ENCODE measurements at regions of chr14 and their contacts with region 1.

Region 1: GRCh38 chr14:44961604-44962333 is at the starts of genes KLHL28 and TOGARAM1:
- DNase-seq: peak; percentile 96 to 99
- ATAC-seq: peak; percentile 92
- total RNA-seq, gene KLHL28: 13.8 to 17.6 TPM
- total RNA-seq, gene TOGARAM1: 11.0 to 13.6 TPM

Region 2: DNA sequence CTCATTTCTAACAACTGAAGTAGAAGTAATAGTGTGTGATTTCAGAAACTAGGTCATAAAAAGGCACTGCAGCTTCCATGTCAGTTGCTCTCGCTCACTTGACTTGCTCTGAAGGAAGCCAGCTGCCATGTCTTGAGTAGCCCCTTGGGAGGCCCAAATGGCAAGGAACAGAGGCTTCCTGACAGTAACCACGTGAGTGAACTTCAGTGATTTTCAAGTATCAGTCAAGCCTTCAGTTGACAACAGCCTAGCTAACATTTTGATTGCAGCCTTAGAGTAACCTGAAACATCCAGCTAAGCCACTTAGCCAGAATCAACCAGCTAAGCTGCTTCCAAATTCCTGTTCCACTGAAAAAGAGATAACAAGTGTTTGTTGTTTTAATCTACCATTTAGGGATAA is 26.9 kb after region 1 on chr14:
- intact Hi-C with region 1: no loop called
- DNase-seq: no peak
- ATAC-seq: no peak

Region 3: GRCh38 chr14:45083971-45084722 is 122.4 kb after region 1 on chr14 and contains the start of gene PRPF39:
- intact Hi-C with region 1: loop called in 1 of 2 experiments (anchors 10 kb)
- DNase-seq: peak; percentile 94 to 96
- ATAC-seq: peak; percentile 94
- total RNA-seq, gene PRPF39: 24.4 to 27.0 TPM

Region 4: DNA sequence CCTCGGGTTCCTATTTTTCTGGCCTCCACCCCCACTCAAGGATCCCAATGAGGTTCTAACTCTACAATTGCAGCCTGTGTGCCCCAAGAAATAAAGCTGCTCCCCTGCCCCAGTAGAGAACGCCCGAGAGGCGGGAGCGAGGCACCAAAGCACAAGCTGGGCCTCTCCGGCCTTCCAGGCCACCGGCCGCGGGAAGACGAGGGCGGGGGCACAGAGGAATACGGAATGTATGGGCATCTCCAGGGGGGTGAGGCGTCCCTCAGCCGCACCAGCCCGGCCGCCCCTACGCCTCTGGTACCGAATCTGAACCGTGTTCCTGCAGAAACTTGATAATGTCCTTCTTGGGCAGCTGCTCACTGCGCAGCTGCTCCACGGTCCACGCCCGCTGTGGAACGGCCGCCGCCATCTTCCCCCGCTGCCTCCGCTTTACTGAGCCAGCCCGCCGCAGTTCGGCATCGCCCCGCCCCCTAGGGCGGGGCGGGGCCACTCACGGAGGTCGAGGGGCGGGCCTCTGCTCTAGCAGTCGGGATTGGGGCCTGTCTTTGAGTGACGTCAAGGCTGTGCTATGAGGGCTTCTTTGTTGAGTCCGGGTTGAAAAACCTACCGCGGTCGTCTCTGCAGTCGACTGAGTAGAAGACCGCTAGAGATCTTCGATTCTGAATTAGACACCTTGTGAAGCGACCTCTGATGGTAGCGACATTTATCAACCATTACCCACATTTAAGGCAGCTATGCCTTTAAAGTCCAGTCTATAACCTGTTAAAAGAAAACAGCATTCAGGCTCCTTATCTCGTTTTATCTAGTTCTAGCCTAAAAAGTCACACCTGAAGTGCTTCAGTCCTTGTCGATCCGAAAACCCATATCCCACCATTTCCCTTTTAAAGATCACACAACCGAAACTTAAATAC is 172.5 kb after region 1 on chr14 and contains the start of gene FKBP3:
- intact Hi-C with region 1: loop called in 1 of 2 experiments (anchors 10 kb)
- DNase-seq: peak; percentile 95 to 99
- ATAC-seq: peak; percentile 92
- total RNA-seq, gene FKBP3: 43.8 to 46.5 TPM